Calu3 (cell line): ENCODE measurements at regions of chr7 and their contacts with region 1.

Region 1: GRCh38 chr7:129740574-129741410 is 129.3 kb downstream of the NRF1 start:
- DNase-seq: no peak
- H3K4me3 Mint-ChIP-seq: no peak overlapping the region
- H3K27ac Mint-ChIP-seq: no peak overlapping the region
- H3K4me1 Mint-ChIP-seq: no peaks in the 10 kb centered on the region
- H3K27me3 Mint-ChIP-seq: no peaks in the 10 kb centered on the region
- CTCF ChIP-seq: no peak

Region 2: GRCh38 chr7:129684777-129685176 is 56.0 kb before region 1 on chr7:
- CTCF ChIA-PET with region 1: interaction called, 11 read pairs
- intact Hi-C with region 1: no loop called
- DNase-seq: no peak
- H3K4me3 Mint-ChIP-seq: no peak overlapping the region
- H3K27ac Mint-ChIP-seq: no peak overlapping the region
- H3K4me1 Mint-ChIP-seq: no peaks in the 10 kb centered on the region
- H3K27me3 Mint-ChIP-seq: no peaks in the 10 kb centered on the region
- CTCF ChIP-seq: no peak

Region 3: GRCh38 chr7:130242198-130243014 is 501.6 kb after region 1 on chr7:
- CTCF ChIA-PET with region 1: no interaction called
- intact Hi-C with region 1: no loop called
- DNase-seq: peak; percentile 77
- H3K4me3 Mint-ChIP-seq: no peak overlapping the region
- H3K27ac Mint-ChIP-seq: no peak overlapping the region
- H3K4me1 Mint-ChIP-seq: no peaks in the 10 kb centered on the region
- H3K27me3 Mint-ChIP-seq: peaks cover 22% of the 10 kb centered on the region
- CTCF ChIP-seq: peak; percentile 95